Transverse colon (tissue), 4 donors: ENCODE measurements at regions of chr3 and their contacts with region 1.

Region 1: GRCh38 chr3:96069065-96069464 is 745.3 kb upstream of the EPHA6 start:
- DNase-seq: no peak
- H3K4me3 ChIP-seq: no peak overlapping the region
- H3K27ac ChIP-seq: no peak overlapping the region
- H3K4me1 ChIP-seq: no peaks in the 10 kb centered on the region
- H3K27me3 ChIP-seq: no peaks in the 10 kb centered on the region
- CTCF ChIP-seq: no peak
- EP300 ChIP-seq: no peak
- POLR2A ChIP-seq: no peak

Region 2: GRCh38 chr3:95673215-95673614 is 395.9 kb before region 1 on chr3:
- in situ Hi-C with region 1: no loop called
- intact Hi-C with region 1: no loop called
- DNase-seq: no peak
- H3K4me3 ChIP-seq: no peak overlapping the region
- H3K27ac ChIP-seq: no peak overlapping the region
- H3K4me1 ChIP-seq: no peaks in the 10 kb centered on the region
- H3K27me3 ChIP-seq: no peaks in the 10 kb centered on the region
- CTCF ChIP-seq: no peak
- EP300 ChIP-seq: no peak
- POLR2A ChIP-seq: no peak

Region 3: DNA sequence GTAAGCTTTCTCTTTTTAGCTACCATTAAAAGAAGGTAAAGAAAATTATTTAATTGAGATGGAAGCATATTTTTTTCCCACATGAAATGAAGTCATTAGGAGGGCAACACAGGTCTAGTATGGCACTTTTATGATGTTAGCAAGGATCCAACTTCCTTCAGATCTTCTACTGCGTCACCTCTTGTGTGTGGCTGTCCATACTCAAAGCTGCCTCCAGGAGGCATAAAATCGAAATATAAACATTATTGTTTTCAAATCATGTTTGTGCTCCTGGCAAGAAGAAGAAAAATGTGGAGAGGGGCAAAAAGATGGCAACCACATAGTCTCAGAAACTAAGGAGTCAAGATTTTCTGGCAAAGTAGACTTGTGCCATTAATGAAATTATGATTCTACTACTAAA is 46.4 kb before region 1 on chr3:
- in situ Hi-C with region 1: no loop called
- intact Hi-C with region 1: no loop called
- DNase-seq: no peak
- H3K4me3 ChIP-seq: no peak overlapping the region
- H3K27ac ChIP-seq: no peak overlapping the region
- H3K4me1 ChIP-seq: no peaks in the 10 kb centered on the region
- H3K27me3 ChIP-seq: no peaks in the 10 kb centered on the region
- CTCF ChIP-seq: no peak
- EP300 ChIP-seq: no peak
- POLR2A ChIP-seq: no peak

Region 4: GRCh38 chr3:96101015-96101667 is 32.1 kb after region 1 on chr3:
- in situ Hi-C with region 1: no loop called
- intact Hi-C with region 1: loop called (anchors 5 kb)
- DNase-seq: no peak
- H3K4me3 ChIP-seq: no peak overlapping the region
- H3K27ac ChIP-seq: no peak overlapping the region
- H3K4me1 ChIP-seq: no peaks in the 10 kb centered on the region
- H3K27me3 ChIP-seq: no peaks in the 10 kb centered on the region
- CTCF ChIP-seq: no peak
- EP300 ChIP-seq: no peak
- POLR2A ChIP-seq: no peak